ENCODE measurements at regions of chr2 and their contacts with region 1.

Region 1: GRCh38 chr2:238370823-238371372 is 50.6 kb downstream of the TRAF3IP1 start:
- ATAC-seq: peak; percentile 53 to 100 (median 84)
- H3K4me3 ChIP-seq: no peak overlapping the region
- H3K27ac ChIP-seq: no peak overlapping the region
- H3K4me1 ChIP-seq: no peaks in the 10 kb centered on the region

Region 2: GRCh38 chr2:238449909-238450417 is 79.1 kb after region 1 on chr2:
- in situ Hi-C with region 1: no loop called
- ATAC-seq: peak in 4 of 8 experiments; percentile 18 to 92 (median 49)
- H3K4me3 ChIP-seq: no peak overlapping the region
- H3K27ac ChIP-seq: no peak overlapping the region
- H3K4me1 ChIP-seq: no peaks in the 10 kb centered on the region

Region 3: GRCh38 chr2:238784671-238785527 is 414.0 kb after region 1 on chr2:
- in situ Hi-C with region 1: loop called in 4 of 9 experiments (anchors 25 kb)
- ATAC-seq: peak; percentile 40 to 87 (median 66)
- H3K4me3 ChIP-seq: no peak overlapping the region
- H3K27ac ChIP-seq: no peak overlapping the region
- H3K4me1 ChIP-seq: peaks cover 0 to 4% of the 10 kb centered on the region in 2 donors

Region 4: DNA sequence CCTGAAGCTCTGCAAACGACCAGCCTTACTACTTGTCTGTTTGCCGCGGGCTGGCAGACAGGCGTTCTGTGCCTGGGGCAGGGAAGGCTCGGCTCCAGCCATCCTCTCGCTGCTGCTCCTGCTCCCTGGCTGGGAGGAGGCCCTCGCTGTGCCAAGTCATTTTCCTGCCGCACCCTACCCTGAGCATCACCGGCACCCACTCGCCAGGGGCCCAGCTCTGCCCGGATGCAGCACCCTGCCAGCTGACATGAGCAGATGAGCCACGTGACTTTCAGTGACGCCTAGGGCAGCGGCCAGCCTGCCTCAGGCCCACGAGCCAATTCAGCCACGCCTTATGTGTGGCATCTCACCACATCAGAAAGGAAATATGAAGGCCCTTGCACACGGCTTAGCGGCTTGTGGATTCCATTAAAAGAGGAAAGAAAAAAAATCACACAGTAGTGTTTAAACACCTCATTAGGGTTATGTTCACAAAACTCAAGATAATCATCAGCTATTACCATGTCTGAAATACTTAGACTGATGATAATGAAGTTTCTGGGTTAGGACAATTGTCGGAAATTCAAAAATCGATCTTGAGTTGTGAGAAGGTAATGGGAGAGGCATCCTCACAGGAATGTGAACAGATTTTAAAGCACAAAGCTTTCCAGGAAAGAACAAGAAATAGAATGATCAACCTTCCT is 727.5 kb after region 1 on chr2:
- in situ Hi-C with region 1: loop called in 1 of 9 experiments (anchors 25 kb)
- ATAC-seq: peak in 3 of 8 experiments; percentile 15 to 72 (median 35)
- H3K4me3 ChIP-seq: no peak overlapping the region
- H3K27ac ChIP-seq: no peak overlapping the region
- H3K4me1 ChIP-seq: peaks cover 14 to 22% of the 10 kb centered on the region in 2 donors

Measured in motor neuron (in vitro differentiated cells).